IMR-90 (cell line): ENCODE measurements at regions of chr3 and their contacts with region 1.

Region 1: DNA sequence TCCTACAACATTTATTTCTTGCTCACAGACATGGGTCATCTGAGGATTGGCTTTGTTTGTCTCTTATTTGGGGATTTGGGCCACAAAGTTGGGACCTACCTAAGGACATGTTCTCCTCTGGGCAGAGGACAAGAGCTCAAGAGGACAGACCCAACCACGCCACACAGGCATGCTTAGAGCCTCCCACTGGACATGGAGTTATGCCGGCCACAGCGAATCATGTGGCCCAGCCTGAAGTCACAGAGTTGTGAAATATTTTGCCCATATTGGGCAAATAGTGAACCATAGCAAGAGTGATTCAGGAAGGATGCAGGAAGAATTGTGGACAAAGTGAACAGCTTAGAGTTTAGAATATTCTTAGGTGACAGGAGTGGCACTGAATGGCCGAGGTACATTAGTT is 9.9 kb downstream of the TRAK1 start:
- DNase-seq: peak; percentile 79
- ATAC-seq: peak; percentile 74
- H3K4me3 ChIP-seq: no peak overlapping the region
- H3K27ac ChIP-seq: peak overlapping the region; percentile 55; the same call in 1 of the 2 replicates
- H3K4me1 ChIP-seq: peaks cover 21% of the 10 kb centered on the region
- H3K27me3 ChIP-seq: no peaks in the 10 kb centered on the region
- CTCF ChIP-seq: no peak
- POLR2A ChIP-seq: no peak
- RAD21 ChIP-seq: no peak

Region 2: DNA sequence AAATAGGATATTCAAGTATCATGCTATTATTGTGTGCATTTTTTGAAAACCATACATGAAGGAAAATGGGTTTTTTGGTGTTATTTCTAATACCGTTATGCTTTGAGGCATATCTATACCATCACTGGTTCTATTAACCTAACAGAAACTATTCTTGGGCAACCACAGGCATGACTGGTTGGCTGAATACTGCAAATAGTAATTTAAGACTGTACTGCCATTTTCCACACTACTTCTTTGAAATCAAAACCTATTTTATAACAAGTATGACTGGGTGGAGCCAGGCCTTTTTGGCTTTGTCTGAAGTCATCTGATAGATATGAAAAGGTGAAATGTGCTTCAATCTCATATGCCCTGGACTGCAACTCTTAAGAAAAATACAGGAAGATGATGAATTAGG is 254.2 kb before region 1 on chr3:
- CTCF ChIA-PET with region 1: no interaction called
- POLR2A ChIA-PET with region 1: no interaction called
- dilution Hi-C with region 1: no loop called
- in situ Hi-C with region 1: no loop called
- intact Hi-C with region 1: no loop called
- DNase-seq: no peak
- ATAC-seq: no peak
- H3K4me3 ChIP-seq: no peak overlapping the region
- H3K27ac ChIP-seq: no peak overlapping the region
- H3K4me1 ChIP-seq: no peaks in the 10 kb centered on the region
- H3K27me3 ChIP-seq: no peaks in the 10 kb centered on the region
- CTCF ChIP-seq: no peak
- POLR2A ChIP-seq: no peak
- RAD21 ChIP-seq: no peak

Region 3: DNA sequence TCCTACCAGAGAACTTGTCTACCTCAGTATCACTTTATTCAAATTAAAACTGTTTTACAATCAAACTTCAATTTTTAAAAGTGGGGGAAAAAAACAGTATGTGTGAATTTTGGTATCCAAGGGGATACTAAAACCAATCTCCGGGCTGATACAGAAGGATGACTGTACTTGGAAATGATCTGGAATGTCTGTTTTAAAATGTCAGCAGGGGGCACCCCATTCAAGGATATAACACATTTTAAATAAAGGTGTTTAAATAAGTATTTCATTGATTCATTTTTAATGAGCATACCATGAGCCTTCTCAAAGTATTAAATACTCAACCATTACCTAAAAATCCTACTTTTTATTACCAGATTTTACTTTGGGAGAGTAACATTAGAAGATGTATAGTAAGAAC is 207.1 kb before region 1 on chr3:
- CTCF ChIA-PET with region 1: interaction called, 12 read pairs
- POLR2A ChIA-PET with region 1: no interaction called
- dilution Hi-C with region 1: no loop called
- in situ Hi-C with region 1: loop called (anchors 5 kb)
- intact Hi-C with region 1: loop called (anchors 1 kb)
- DNase-seq: peak; percentile 62
- ATAC-seq: peak; percentile 68
- H3K4me3 ChIP-seq: no peak overlapping the region
- H3K27ac ChIP-seq: no peak overlapping the region
- H3K4me1 ChIP-seq: no peaks in the 10 kb centered on the region
- H3K27me3 ChIP-seq: no peaks in the 10 kb centered on the region
- CTCF ChIP-seq: peak; percentile 65
- POLR2A ChIP-seq: no peak
- RAD21 ChIP-seq: peak; percentile 77

Region 4: DNA sequence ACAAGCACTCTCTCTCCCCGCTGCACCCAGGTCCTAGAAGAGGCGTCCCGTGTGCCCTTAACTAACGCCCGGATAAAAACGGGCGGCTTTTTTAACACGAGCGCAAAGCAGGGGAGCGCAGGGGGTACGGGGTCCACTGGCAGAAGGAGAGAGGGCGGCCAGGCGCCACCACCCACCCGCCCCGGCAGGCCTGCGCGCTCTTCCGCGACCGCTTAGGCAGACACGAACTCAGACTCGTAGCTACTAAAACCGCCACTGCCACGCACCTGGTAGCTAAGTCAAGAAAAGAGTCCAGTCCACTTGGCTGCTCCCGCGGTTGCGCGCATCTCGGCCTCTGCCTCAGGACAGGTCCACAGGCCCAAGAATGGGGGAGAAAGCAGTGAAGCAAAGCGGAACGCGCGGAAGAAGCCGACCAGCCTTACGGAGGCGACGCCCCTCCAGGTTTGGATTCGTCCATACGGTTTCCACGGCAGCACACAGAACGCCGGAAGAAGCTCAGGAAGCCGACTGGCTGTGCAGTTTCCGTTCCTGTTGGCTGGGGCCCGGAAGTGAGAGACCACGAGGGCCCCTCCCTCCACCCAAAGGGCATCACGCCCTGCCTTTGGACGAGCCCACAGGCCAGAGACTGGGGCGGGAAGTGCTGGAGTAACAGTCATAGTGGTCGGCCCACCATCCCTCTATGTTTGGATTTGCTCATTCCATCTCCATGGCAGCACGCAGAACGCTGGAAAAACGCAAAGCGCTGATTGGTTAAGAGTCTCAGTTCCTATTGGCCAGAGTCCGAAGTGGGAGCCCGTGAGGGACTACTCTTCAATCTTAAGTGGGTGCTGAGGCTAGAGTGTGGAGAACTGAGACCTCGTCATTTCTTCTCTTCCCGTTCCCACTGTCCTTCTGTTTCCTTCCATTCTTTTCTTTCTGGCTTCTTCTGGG is 139.0 kb before region 1 on chr3 and contains the start of gene ULK4:
- CTCF ChIA-PET with region 1: interaction called, 4 read pairs
- POLR2A ChIA-PET with region 1: no interaction called
- dilution Hi-C with region 1: no loop called
- in situ Hi-C with region 1: no loop called
- intact Hi-C with region 1: loop called (anchors 1 kb)
- DNase-seq: peak; percentile 100
- ATAC-seq: peak; percentile 94
- H3K4me3 ChIP-seq: peak within 1 kb of the TSS; percentile 52
- H3K27ac ChIP-seq: peak within 1 kb of the TSS; percentile 25
- H3K4me1 ChIP-seq: peaks cover 3% of the 10 kb centered on the region; the same call in 1 of the 2 replicates
- H3K27me3 ChIP-seq: no peaks in the 10 kb centered on the region
- CTCF ChIP-seq: no peak
- POLR2A ChIP-seq: peak; percentile 74; the same call in 1 of the 2 replicates
- RAD21 ChIP-seq: no peak
- total RNA-seq, gene ULK4: 5.0 and 10.3 TPM in 2 replicates

Region 5: GRCh38 chr3:42025370-42026138 is 75.5 kb before region 1 on chr3:
- CTCF ChIA-PET with region 1: interaction called, 10 read pairs
- POLR2A ChIA-PET with region 1: no interaction called
- dilution Hi-C with region 1: no loop called
- in situ Hi-C with region 1: no loop called
- intact Hi-C with region 1: loop called (anchors 5 kb)
- DNase-seq: peak; percentile 99
- ATAC-seq: peak; percentile 87
- H3K4me3 ChIP-seq: no peak overlapping the region
- H3K27ac ChIP-seq: peak overlapping the region; percentile 50; the same call in 1 of the 2 replicates
- H3K4me1 ChIP-seq: peaks cover 23% of the 10 kb centered on the region
- H3K27me3 ChIP-seq: no peaks in the 10 kb centered on the region
- CTCF ChIP-seq: no peak
- POLR2A ChIP-seq: 0 out of 2 replicates have a peak, but pooled peaks have one; percentile 34
- RAD21 ChIP-seq: no peak

Region 6: GRCh38 chr3:42159706-42160472 is 58.8 kb after region 1 on chr3:
- CTCF ChIA-PET with region 1: no interaction called
- POLR2A ChIA-PET with region 1: no interaction called
- dilution Hi-C with region 1: no loop called
- in situ Hi-C with region 1: no loop called
- intact Hi-C with region 1: no loop called
- DNase-seq: no peak
- ATAC-seq: peak; percentile 69
- H3K4me3 ChIP-seq: no peak overlapping the region
- H3K27ac ChIP-seq: peak overlapping the region; percentile 17; the same call in 1 of the 2 replicates
- H3K4me1 ChIP-seq: peaks cover 8% of the 10 kb centered on the region
- H3K27me3 ChIP-seq: no peaks in the 10 kb centered on the region
- CTCF ChIP-seq: no peak
- POLR2A ChIP-seq: no peak
- RAD21 ChIP-seq: no peak

Region 7: DNA sequence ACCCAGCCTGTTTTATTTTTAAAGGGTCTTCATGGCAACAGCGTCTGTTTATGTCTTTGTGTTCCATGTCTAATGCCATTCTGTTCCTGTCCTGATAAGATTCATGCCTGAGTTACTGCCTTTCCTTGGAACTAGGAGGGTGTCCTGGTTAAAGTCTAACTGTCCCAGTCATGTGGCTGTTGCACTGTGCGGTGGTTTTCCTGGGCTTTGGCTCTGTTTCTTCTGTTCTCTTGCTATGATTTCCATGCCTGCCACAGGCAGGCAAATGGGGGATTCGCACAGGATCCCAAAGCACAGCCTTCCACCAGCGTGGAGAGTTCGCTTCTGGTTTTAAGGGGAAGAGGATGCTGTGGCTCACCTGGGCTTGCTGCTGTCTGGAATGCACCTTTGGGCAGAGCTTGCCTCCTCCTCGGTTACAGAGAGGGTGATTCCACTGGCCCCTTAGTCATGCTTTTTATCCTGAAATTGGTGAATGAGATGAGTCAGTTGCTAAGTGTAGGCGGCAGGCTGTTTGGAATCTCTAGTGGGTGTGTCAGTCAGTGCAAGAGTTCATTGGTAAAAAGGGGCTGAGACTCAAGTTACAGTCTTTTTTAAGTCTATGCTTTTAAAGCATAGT is 78.2 kb after region 1 on chr3:
- CTCF ChIA-PET with region 1: no interaction called
- POLR2A ChIA-PET with region 1: no interaction called
- dilution Hi-C with region 1: no loop called
- in situ Hi-C with region 1: no loop called
- intact Hi-C with region 1: no loop called
- DNase-seq: peak; percentile 93
- ATAC-seq: peak; percentile 97
- H3K4me3 ChIP-seq: no peak overlapping the region
- H3K27ac ChIP-seq: peak overlapping the region; percentile 8; the same call in 1 of the 2 replicates
- H3K4me1 ChIP-seq: peaks cover 8% of the 10 kb centered on the region
- H3K27me3 ChIP-seq: no peaks in the 10 kb centered on the region
- CTCF ChIP-seq: no peak
- POLR2A ChIP-seq: no peak
- RAD21 ChIP-seq: no peak

Region 8: GRCh38 chr3:42190701-42191462 is 89.8 kb after region 1 on chr3:
- CTCF ChIA-PET with region 1: interaction called, 7 read pairs
- POLR2A ChIA-PET with region 1: no interaction called
- dilution Hi-C with region 1: no loop called
- in situ Hi-C with region 1: no loop called
- intact Hi-C with region 1: loop called (anchors 5 kb)
- DNase-seq: peak; percentile 52
- ATAC-seq: peak; percentile 75
- H3K4me3 ChIP-seq: no peak overlapping the region
- H3K27ac ChIP-seq: no peak overlapping the region
- H3K4me1 ChIP-seq: peaks cover 4% of the 10 kb centered on the region
- H3K27me3 ChIP-seq: no peaks in the 10 kb centered on the region
- CTCF ChIP-seq: peak; percentile 74
- POLR2A ChIP-seq: no peak
- RAD21 ChIP-seq: peak; percentile 77